ENCODE measurements at regions of chr13 and their contacts with region 1.

Region 1: DNA sequence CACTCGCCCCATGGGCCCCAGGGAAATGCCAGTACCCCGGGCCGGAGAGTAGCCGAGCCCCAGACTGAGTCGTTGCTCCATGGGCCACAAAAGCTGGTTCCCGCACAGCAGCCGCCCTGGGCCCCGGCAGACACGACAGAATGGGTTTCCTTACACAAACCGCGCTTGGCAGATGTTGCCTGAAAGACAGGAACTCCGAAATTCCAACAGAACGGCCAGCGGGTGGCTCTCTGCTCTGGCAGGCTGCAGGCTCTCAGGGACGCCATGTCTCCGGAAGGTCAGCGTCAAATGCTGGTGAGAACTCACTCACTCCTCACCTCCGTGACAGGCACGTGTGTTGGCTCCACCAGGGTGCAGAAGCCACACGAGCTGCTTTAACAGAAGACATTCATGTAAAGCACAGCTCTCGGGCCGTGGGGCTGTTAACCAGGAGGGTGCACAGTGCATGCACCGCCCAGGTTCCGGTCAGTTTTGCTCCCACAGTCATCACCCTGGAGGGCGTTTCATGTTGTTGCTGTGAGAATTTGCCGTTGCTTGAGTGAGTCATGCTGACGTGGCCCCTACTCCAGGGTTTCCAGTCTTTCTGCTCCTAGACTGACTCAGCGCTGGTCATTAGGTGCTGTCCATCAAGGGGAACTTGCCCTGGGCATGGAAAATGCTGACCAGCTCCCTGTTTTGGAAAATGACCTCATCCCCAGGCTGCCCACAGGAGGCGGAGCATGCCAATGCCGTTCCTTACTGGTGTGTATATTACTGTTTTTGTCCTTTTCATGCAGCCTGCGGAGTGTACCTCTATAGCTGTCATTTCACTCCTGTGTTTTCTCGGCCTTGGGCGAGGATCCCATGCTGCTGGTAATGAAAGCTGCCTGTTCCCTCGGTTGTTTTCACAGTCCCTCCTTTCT is 44.8 kb downstream of the ANKRD10 start:
- DNase-seq: no peak
- H3K4me3 Mint-ChIP-seq: no peak overlapping the region
- H3K27ac Mint-ChIP-seq: no peak overlapping the region
- H3K4me1 Mint-ChIP-seq: peaks cover 6% of the 10 kb centered on the region
- H3K27me3 Mint-ChIP-seq: peaks cover 26% of the 10 kb centered on the region

Region 2: GRCh38 chr13:110784704-110785103 is 85.4 kb before region 1 on chr13:
- CTCF ChIA-PET with region 1: no interaction called
- POLR2A ChIA-PET with region 1: no interaction called
- DNase-seq: no peak
- H3K4me3 Mint-ChIP-seq: no peak overlapping the region
- H3K27ac Mint-ChIP-seq: no peak overlapping the region
- H3K4me1 Mint-ChIP-seq: no peaks in the 10 kb centered on the region
- H3K27me3 Mint-ChIP-seq: peaks cover 28% of the 10 kb centered on the region

Region 3: GRCh38 chr13:110882972-110883371 is 12.9 kb after region 1 on chr13:
- CTCF ChIA-PET with region 1: interaction called, 18 read pairs
- POLR2A ChIA-PET with region 1: no interaction called
- DNase-seq: no peak
- H3K4me3 Mint-ChIP-seq: no peak overlapping the region
- H3K27ac Mint-ChIP-seq: no peak overlapping the region
- H3K4me1 Mint-ChIP-seq: peaks cover 19% of the 10 kb centered on the region
- H3K27me3 Mint-ChIP-seq: no peaks in the 10 kb centered on the region

Measured in activated CD4-positive, alpha-beta T cell treated with anti-CD3 and anti-CD28 coated beads, Interleukin-2, amount 10 ng/mL, durations not matched to agents 7 days and 5 days (primary cell).